ENCODE measurements at regions of chr3 and their contacts with region 1.

Region 1: GRCh38 chr3:33636125-33636850 is 81.8 kb downstream of the CLASP2 start:
- DNase-seq: no peak
- H3K4me3 Mint-ChIP-seq: no peak overlapping the region
- H3K27ac Mint-ChIP-seq: no peak overlapping the region
- H3K4me1 Mint-ChIP-seq: peaks cover 6% of the 10 kb centered on the region
- H3K27me3 Mint-ChIP-seq: no peaks in the 10 kb centered on the region

Region 2: GRCh38 chr3:33597257-33597689 is 39.0 kb before region 1 on chr3:
- intact Hi-C with region 1: no loop called
- DNase-seq: no peak
- H3K4me3 Mint-ChIP-seq: no peak overlapping the region
- H3K27ac Mint-ChIP-seq: no peak overlapping the region
- H3K4me1 Mint-ChIP-seq: no peaks in the 10 kb centered on the region
- H3K27me3 Mint-ChIP-seq: no peaks in the 10 kb centered on the region

Region 3: DNA sequence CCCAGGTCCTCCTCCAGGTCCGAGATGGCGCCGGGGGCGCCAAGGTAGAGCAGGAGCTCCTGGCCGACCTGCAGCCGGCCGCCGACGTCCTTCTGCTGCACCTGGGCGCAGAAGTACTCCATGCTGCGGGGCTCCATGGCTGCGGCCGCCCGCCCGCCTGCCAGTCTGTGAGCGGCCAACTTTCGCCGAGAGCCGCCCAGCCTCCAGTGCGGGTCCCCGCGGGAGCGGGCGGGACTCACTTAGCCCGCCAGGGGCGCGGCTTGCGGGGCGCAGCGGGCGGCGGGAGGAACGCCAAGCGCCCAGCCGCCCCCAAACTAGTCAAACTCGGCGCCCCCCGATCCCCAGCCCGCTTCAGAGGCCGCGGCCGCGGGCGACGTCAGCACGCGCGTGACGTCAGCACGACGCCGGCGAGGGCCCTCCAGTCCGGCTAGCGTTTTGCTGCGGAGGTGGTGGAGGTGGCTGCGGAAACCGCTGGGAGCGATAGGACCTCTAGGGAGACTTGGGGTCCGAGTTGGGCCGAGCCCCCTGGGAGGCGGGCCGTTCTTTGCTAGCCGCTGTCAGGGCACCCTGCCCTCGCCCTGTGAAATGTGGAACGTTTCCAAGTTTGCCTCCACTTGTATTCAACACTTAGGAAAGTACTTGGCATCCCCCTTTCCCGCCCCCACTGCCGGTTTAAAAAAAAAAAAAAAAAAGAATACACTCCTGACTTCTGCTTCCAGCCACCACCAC is 81.7 kb after region 1 on chr3 and contains the start of gene CLASP2:
- intact Hi-C with region 1: loop called (anchors 1 kb)
- DNase-seq: peak; percentile 77
- H3K4me3 Mint-ChIP-seq: peak within 1 kb of the TSS; percentile 89
- H3K27ac Mint-ChIP-seq: peak within 1 kb of the TSS; percentile 86
- H3K4me1 Mint-ChIP-seq: peaks cover 11% of the 10 kb centered on the region
- H3K27me3 Mint-ChIP-seq: peaks cover 2% of the 10 kb centered on the region
- total RNA-seq, gene CLASP2: 58.8 and 70.9 TPM in 2 replicates

Region 4: DNA sequence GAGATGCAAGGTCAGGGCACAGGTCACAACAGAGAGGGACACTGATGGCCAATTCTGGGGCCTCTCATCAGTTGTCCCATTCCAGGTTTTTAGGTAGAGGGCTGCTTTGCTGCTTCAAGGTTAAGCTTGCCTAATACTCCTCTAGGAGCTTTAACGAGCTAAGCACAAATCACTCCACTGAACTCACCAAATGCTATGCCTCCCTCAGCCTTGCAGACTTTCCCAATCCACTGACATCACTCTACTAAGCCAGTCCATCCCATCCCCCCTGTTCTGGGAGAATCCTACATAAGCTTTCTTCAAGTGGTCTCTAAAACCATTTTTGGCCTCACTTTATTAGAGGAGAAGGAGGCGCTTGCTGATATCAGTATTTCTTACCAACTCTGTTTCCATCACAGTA is 137.3 kb after region 1 on chr3:
- intact Hi-C with region 1: loop called (anchors 1 kb)
- DNase-seq: no peak
- H3K4me3 Mint-ChIP-seq: no peak overlapping the region
- H3K27ac Mint-ChIP-seq: no peak overlapping the region
- H3K4me1 Mint-ChIP-seq: no peaks in the 10 kb centered on the region
- H3K27me3 Mint-ChIP-seq: peaks cover 7% of the 10 kb centered on the region

Region 5: DNA sequence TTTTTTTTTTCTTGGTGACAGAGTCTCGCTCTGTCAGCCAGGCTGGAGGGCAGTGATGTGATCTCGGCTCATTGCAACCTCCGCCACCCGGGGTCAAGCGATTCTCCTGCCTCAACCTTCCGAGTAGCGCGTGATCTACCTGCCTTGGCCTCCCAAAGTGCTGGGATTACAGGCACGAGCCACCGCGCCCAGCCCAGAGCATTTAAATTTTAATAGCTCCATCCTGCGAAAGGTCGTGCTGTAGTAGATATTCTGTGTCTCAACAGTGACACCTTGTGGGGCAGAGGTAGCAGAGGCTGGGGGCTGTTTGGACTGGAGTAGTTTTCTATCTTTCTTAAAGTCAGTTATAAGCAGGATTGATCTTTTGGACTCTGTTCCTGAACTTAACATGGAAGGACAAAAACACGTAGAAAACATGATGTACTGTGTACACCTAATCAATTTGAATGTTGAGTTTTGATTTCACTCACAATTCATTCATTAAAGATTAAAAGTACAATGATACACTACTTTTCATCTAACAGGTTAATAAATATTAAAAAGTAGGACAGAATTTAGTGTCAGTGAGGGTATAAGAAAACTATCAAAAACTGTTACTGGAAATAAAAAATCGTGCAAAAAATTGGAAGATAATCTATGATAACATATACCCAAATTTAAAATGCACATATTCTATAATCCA is 151.2 kb after region 1 on chr3:
- intact Hi-C with region 1: loop called (anchors 1 kb)
- DNase-seq: peak; percentile 34
- H3K4me3 Mint-ChIP-seq: no peak overlapping the region
- H3K27ac Mint-ChIP-seq: no peak overlapping the region
- H3K4me1 Mint-ChIP-seq: peaks cover 14% of the 10 kb centered on the region
- H3K27me3 Mint-ChIP-seq: peaks cover 23% of the 10 kb centered on the region

Measured in activated T-helper 2 cell treated with anti-CD3 and anti-CD28 coated beads, Interferon-gamma antibody, Interleukin-2, Interleukin-4, amounts not matched to agents 10 μg/mL and 5 μg/mL and 100 μg/mL, durations not matched to agents 14 hours and 24 hours and 36 hours (primary cell).